CD4-positive, alpha-beta T cell (primary cell): ENCODE measurements at regions of chr21 and their contacts with region 1.

Region 1: DNA sequence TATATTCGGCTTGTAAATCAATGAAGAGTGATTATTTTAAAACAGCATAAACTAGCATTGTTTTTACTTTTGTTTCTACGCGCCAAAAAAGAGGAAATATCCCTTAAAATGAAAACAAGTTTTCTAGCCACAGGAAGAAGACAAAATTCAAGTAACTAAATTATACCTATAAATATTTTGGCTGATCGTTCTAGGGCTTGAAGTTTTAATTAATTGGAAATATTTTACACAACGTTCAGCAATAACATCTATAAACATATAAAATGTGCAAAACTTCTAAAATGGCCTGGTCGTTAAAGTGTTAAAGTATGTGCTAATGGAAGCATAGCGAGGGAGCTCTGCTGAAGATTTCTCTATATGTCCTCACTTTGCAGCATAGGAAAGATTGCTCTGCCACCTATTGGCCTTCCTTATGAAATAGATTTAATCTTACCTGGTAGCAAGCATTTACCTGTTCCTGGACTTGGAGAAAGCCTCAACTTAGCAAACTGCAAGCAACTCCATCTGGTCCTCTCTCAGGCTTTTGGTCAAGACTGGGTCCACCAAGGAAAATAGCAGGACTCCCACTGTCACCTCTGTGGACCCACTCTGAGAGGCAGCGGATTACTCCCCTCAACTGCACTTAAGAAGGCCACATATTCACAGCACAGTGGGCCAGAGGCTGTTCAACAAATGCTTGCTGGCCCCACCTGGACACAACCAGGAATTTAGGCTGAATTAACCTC is 351.3 kb upstream of the RUNX1 start:
- DNase-seq: peak in 12 of 14 experiments; percentile 3 to 81 (median 21)
- ATAC-seq: peak; percentile 92
- H3K4me3 ChIP-seq: no peak overlapping the region
- H3K4me3 Mint-ChIP-seq: no peak overlapping the region
- H3K27ac ChIP-seq: no peak overlapping the region
- H3K27ac Mint-ChIP-seq: no peak overlapping the region
- H3K4me1 ChIP-seq: peaks cover 3% of the 10 kb centered on the region
- H3K4me1 Mint-ChIP-seq: peaks cover 6% of the 10 kb centered on the region
- H3K27me3 ChIP-seq: no peaks in the 10 kb centered on the region
- H3K27me3 Mint-ChIP-seq: no peaks in the 10 kb centered on the region
- CTCF ChIP-seq: peak; percentile 75

Region 2: GRCh38 chr21:34745557-34746255 is 654.7 kb before region 1 on chr21:
- CTCF ChIA-PET with region 1: interaction called, 8 read pairs
- POLR2A ChIA-PET with region 1: interaction called, 5 read pairs
- intact Hi-C with region 1: loop called (anchors 1 kb)
- DNase-seq: peak; percentile 12 to 77 (median 38)
- ATAC-seq: peak; percentile 73
- H3K4me3 ChIP-seq: no peak overlapping the region
- H3K4me3 Mint-ChIP-seq: peak overlapping the region; percentile 74
- H3K27ac ChIP-seq: no peak overlapping the region
- H3K27ac Mint-ChIP-seq: no peak overlapping the region
- H3K4me1 ChIP-seq: peaks cover 8% of the 10 kb centered on the region
- H3K4me1 Mint-ChIP-seq: peaks cover 5% of the 10 kb centered on the region
- H3K27me3 ChIP-seq: no peaks in the 10 kb centered on the region
- H3K27me3 Mint-ChIP-seq: no peaks in the 10 kb centered on the region
- CTCF ChIP-seq: peak; percentile 88

Region 3: DNA sequence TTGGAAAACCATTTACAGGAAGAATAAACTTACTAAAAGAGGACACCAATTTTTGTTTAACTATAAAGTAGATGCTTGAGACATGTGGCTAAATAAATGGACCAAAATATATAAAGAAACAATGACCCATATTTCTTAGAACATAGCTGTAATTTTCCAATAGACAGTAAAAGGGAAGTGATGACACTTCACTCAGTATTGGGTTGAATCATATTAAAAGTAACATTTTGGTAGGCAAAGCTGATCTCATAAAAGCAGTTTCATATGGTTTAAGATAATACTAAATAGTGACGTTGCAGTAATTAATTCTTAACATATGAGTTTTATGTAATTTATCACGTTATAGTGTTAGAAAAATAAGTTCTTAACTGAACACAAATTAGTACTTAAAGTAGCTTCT is 42.4 kb before region 1 on chr21:
- CTCF ChIA-PET with region 1: no interaction called
- POLR2A ChIA-PET with region 1: no interaction called
- intact Hi-C with region 1: no loop called
- DNase-seq: no peak
- ATAC-seq: no peak
- H3K4me3 ChIP-seq: no peak overlapping the region
- H3K4me3 Mint-ChIP-seq: no peak overlapping the region
- H3K27ac ChIP-seq: no peak overlapping the region
- H3K27ac Mint-ChIP-seq: no peak overlapping the region
- H3K4me1 ChIP-seq: no peaks in the 10 kb centered on the region
- H3K4me1 Mint-ChIP-seq: no peaks in the 10 kb centered on the region
- H3K27me3 ChIP-seq: no peaks in the 10 kb centered on the region
- H3K27me3 Mint-ChIP-seq: no peaks in the 10 kb centered on the region
- CTCF ChIP-seq: no peak

Region 4: DNA sequence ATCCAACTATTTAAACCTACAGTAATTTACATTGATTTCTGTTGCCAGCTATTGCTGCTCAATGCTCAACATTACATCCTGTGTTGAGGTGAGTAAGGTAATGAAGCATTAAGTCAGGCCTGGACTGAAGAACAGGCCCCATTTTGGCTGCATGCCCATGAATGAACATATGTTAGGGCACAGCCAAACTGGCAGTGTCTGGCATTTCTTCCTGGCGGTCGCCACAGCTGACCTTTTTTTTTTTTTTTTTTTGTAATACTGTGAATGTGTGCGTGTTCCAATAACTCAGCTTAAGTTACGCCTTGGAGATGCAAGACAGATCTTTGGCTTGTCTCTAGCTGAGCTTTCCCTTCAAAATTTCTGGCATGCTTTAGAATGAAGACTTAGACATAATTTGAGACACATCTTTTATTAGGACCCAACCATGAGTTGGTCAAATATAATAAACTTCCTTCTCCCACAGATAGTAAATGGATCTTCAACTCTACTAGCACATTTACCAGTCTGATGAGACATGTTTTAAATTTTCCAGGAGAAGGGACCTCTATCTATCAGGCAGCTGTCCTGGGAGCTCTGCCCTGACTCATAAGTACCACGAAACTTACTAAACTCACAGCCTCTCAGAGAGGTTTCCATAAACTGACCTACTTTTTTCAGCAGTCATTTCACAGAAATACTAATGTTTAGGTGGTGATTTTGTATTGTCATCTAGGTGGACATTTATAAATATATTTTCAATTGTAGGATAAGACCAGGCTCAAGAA is 10.2 kb before region 1 on chr21:
- CTCF ChIA-PET with region 1: no interaction called
- POLR2A ChIA-PET with region 1: no interaction called
- intact Hi-C with region 1: no loop called
- DNase-seq: no peak
- ATAC-seq: no peak
- H3K4me3 ChIP-seq: no peak overlapping the region
- H3K4me3 Mint-ChIP-seq: no peak overlapping the region
- H3K27ac ChIP-seq: no peak overlapping the region
- H3K27ac Mint-ChIP-seq: no peak overlapping the region
- H3K4me1 ChIP-seq: no peaks in the 10 kb centered on the region
- H3K4me1 Mint-ChIP-seq: no peaks in the 10 kb centered on the region
- H3K27me3 ChIP-seq: no peaks in the 10 kb centered on the region
- H3K27me3 Mint-ChIP-seq: no peaks in the 10 kb centered on the region
- CTCF ChIP-seq: no peak

Region 5: DNA sequence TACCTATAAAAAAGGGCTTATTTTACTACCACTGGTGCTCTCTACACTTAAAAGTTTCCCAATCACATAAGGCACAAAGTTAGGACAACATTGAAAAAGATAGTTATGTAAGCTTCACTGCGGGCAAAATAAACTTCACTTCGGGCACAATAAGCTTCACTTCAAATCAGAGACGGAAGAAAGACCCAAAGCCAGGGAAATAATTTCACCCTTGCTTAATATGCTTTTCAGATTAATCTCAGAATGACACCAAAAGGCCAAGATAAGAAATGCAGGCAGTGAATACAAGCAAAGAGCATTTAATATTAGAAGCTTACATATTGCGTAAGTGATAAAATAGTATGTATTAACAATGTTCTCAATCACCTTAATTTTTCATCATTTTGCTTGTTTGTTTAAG is 215.7 kb after region 1 on chr21:
- CTCF ChIA-PET with region 1: no interaction called
- POLR2A ChIA-PET with region 1: no interaction called
- intact Hi-C with region 1: loop called in 1 of 2 experiments (anchors 10 kb)
- DNase-seq: peak in 3 of 14 experiments; percentile 14 to 32 (median 26)
- ATAC-seq: no peak
- H3K4me3 ChIP-seq: no peak overlapping the region
- H3K4me3 Mint-ChIP-seq: no peak overlapping the region
- H3K27ac ChIP-seq: no peak overlapping the region
- H3K27ac Mint-ChIP-seq: no peak overlapping the region
- H3K4me1 ChIP-seq: no peaks in the 10 kb centered on the region
- H3K4me1 Mint-ChIP-seq: peaks cover 4% of the 10 kb centered on the region
- H3K27me3 ChIP-seq: no peaks in the 10 kb centered on the region
- H3K27me3 Mint-ChIP-seq: no peaks in the 10 kb centered on the region
- CTCF ChIP-seq: peak; percentile 24

Region 6: GRCh38 chr21:36028127-36029069 is 628.0 kb after region 1 on chr21:
- CTCF ChIA-PET with region 1: no interaction called
- POLR2A ChIA-PET with region 1: no interaction called
- intact Hi-C with region 1: loop called in 1 of 2 experiments (anchors 5 kb)
- DNase-seq: peak; percentile 25 to 85 (median 56)
- ATAC-seq: peak; percentile 80
- H3K4me3 ChIP-seq: no peak overlapping the region
- H3K4me3 Mint-ChIP-seq: no peak overlapping the region
- H3K27ac ChIP-seq: no peak overlapping the region
- H3K27ac Mint-ChIP-seq: no peak overlapping the region
- H3K4me1 ChIP-seq: peaks cover 5% of the 10 kb centered on the region
- H3K4me1 Mint-ChIP-seq: peaks cover 5% of the 10 kb centered on the region
- H3K27me3 ChIP-seq: no peaks in the 10 kb centered on the region
- H3K27me3 Mint-ChIP-seq: no peaks in the 10 kb centered on the region
- CTCF ChIP-seq: peak; percentile 95